ENCODE measurements at regions of chrX and their contacts with region 1.

Region 1: GRCh38 chrX:46408553-46409407 is 136.4 kb downstream of the ZNF674 start:
- DNase-seq: peak; percentile 49
- CTCF ChIP-seq: peak; percentile 63

Region 2: DNA sequence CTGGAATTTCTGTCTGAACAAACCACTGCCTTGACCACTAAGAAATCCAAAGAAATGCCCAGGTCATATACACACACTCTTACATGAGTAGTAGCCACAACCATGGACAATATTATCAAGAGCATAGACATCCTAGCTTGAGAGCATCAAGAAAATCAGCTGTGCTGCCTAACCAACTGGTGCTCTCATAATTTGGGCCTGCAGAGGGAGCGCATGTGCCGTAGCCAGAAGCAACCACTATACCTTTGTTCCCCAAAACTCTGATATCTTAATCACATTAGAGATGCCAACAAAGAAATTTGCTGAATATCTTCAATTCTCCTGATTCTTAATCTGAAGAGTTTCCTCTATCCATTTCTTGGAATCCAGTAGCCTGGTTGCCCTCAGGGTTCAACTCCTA is 27.1 kb before region 1 on chrX:
- CTCF ChIA-PET with region 1: interaction called, 13 read pairs
- POLR2A ChIA-PET with region 1: no interaction called
- DNase-seq: no peak
- CTCF ChIP-seq: peak; percentile 33

Region 3: GRCh38 chrX:46398126-46398525 is 10.7 kb before region 1 on chrX:
- CTCF ChIA-PET with region 1: interaction called, 11 read pairs
- POLR2A ChIA-PET with region 1: no interaction called
- DNase-seq: no peak
- CTCF ChIP-seq: no peak

Measured in GM10248 (cell line).